ENCODE measurements at regions of chr3 and their contacts with region 1.

Region 1: DNA sequence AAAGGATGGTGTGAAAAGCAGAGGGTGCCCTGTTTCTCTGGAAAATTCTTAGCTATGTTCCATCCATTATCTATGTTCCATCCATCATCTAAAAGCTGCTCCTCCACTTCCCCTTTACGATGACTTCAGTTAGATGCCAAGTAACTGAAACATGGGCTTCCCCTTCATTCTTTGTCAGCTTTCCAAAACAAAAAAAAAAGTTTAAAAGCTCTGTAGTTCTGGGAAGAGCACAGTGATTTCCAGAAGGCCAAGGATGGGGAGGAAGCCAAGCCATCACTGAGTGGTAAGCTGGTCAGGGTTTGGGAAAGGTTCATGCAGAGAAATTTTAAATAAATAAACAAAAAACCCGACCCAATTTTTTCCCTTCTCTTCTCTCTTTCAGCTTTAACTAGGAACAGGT is 111.5 kb downstream of the CFAP44 start:
- DNase-seq: no peak
- ATAC-seq: no peak
- H3K4me3 ChIP-seq: no peak overlapping the region
- H3K27ac ChIP-seq: no peak overlapping the region
- H3K4me1 ChIP-seq: no peaks in the 10 kb centered on the region
- H3K27me3 ChIP-seq: no peaks in the 10 kb centered on the region; the same call in 1 of the 2 replicates
- CTCF ChIP-seq: no peak

Region 2: DNA sequence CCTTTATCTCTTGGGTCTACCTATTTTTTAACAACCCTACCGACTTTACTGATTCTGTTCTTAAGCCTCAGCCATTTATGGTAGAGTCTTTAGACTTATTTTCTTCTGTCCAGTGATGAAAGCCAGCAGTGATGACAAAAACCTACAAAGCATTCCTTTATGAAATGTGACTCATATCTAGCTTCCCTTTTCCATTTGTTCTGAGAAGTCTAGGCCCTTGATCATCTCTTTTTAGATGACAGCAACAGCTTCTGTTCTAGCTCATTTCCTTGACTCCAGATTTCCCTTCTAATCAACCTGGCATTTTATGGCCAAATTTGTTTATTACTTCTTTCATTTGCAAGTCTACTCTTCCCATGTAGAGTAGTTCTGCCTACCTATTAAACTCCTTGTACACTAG is 75.4 kb after region 1 on chr3:
- CTCF ChIA-PET with region 1: no interaction called
- POLR2A ChIA-PET with region 1: no interaction called
- in situ Hi-C with region 1: no loop called
- intact Hi-C with region 1: no loop called
- DNase-seq: no peak
- ATAC-seq: no peak
- H3K4me3 ChIP-seq: no peak overlapping the region
- H3K27ac ChIP-seq: no peak overlapping the region
- H3K4me1 ChIP-seq: peaks cover 5% of the 10 kb centered on the region; the same call in 1 of the 2 replicates
- H3K27me3 ChIP-seq: no peaks in the 10 kb centered on the region
- CTCF ChIP-seq: no peak

Region 3: DNA sequence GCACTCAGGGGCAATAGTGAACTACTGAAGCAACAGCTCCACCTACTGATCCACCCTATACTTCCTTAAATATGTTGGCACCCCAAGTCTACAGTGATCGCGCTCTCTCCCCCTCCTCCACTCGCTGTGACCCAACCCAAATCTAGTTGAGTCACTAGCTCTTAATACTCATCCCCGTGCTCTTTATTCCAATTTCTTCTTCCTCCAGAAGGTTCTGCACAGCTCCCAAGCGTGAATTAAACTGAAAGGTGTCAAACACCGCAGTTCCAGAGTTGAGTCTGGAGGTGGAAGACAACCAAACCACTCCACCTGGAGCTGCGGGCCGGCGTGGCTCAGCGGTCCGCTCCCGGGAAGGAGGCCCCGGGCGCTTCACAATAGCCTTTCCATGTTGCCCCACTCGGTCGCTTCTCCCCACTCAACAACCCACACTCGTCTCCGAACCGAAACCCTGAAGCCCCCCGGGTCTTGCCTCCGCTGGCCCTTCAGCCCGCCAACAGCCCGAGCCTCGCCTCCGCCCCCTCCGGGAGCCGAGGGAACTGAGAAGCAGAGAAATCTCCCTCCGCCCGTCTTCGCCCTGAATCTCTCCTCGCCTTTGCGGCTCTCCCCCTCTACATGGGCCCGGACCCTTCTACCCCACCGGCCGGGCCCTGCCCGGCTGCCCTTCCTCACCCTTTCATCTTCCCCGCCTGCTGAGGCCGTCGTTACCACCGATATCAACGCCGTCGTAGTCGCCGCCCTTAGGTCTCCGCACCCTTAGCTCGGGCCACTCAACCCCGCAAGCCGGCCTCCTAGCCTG is 415.7 kb after region 1 on chr3:
- CTCF ChIA-PET with region 1: interaction called, 14 read pairs
- POLR2A ChIA-PET with region 1: no interaction called
- in situ Hi-C with region 1: no loop called
- intact Hi-C with region 1: no loop called
- DNase-seq: peak; percentile 84
- ATAC-seq: peak; percentile 74
- H3K4me3 ChIP-seq: peak overlapping the region; percentile 97 to 99
- H3K27ac ChIP-seq: peak overlapping the region; percentile 100
- H3K4me1 ChIP-seq: peaks cover 52% of the 10 kb centered on the region
- H3K27me3 ChIP-seq: no peaks in the 10 kb centered on the region
- CTCF ChIP-seq: peak; percentile 88